Left ventricle myocardium inferior (tissue), 1 donor: ENCODE measurements at regions of chr1 and their contacts with region 1.

Region 1: GRCh38 chr1:58739856-58740466 is 40.1 kb upstream of the MYSM1 start:
- DNase-seq: no peak
- H3K4me3 ChIP-seq: no peak overlapping the region
- H3K27ac ChIP-seq: no peak overlapping the region
- H3K4me1 ChIP-seq: peaks cover 8% of the 10 kb centered on the region
- H3K27me3 ChIP-seq: no peaks in the 10 kb centered on the region
- CTCF ChIP-seq: peak; percentile 88

Region 2: DNA sequence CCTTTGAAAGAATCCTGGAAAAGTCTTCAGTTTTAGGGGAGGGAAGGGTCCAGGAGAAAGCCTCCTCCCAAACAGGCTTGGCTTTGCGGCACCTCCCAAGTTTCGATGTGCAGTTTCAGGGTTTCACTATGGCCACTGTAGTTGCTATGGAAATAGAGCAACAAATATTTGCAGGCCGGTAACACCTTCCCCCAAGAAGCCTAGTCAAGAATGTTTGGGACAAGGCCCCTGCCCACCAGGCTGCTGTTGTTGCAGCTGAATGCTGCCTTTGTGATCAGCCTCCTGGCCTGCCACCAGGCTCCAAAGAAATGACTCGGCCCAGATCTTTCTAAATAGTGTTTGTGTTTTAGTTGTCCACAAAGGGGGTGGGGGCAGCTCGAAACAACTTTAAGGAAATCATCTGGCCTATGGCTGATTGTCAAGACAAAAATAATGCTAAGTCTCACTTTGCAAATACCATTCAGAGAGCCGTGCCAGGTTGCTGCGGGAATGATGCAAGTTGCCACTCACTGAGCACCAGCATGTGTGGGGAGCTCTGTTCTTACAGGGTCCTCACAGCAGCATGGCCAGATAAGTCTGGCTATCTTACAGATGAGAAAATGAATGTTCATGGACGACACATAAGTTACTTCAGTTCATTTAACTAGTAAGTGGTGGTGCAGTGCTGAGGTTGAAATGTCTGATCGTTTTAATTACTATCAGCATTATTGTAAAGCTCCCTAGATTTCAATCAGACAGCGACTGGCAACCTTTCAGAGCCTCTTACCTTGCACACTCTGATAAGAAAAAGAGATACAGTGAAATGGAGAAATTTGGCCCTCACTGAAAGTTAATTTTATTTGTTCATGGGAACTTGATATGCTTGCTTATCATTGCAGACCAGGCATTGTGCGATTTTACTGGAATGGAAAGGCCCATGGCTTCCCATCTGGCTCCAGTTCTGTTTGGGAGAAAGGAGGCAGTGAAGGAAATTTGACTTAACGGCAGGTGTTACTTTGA is 135.1 kb after region 1 on chr1:
- intact Hi-C with region 1: no loop called
- DNase-seq: peak; percentile 35
- H3K4me3 ChIP-seq: no peak overlapping the region
- H3K27ac ChIP-seq: peak overlapping the region; percentile 60
- H3K4me1 ChIP-seq: peaks cover 30% of the 10 kb centered on the region
- H3K27me3 ChIP-seq: no peaks in the 10 kb centered on the region
- CTCF ChIP-seq: no peak

Region 3: DNA sequence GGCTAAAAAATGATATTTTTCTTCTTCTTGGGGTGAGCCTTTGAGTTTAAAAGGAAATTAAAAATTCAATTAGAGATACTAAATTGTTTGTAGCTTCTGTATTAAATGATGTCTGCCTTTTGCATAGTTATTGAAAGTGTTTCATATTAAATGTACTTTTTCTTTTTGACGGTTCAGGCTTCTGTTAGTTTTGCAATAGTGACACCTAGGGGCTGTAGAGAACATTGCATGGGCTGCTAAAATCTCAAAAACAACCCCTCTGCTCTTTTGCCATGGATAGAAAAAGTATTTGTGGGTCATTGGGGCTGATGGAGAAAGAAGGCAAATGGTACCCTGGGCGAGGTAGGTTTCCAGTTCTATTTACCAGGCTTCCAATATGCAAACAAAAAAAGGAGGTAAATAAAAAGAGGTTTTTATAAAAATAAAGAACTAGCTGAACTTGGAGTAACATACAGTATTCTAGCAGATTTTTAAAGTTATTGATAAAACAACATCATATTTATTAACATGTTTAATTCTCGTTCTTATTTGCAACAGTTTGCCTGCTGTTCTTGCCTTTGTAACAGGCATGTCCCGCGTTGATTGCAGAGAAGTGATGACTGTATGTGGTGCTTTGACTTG is 959.4 kb after region 1 on chr1:
- intact Hi-C with region 1: loop called (anchors 5 kb)
- DNase-seq: no peak
- H3K4me3 ChIP-seq: no peak overlapping the region
- H3K27ac ChIP-seq: peak overlapping the region; percentile 45
- H3K4me1 ChIP-seq: peaks cover 43% of the 10 kb centered on the region
- H3K27me3 ChIP-seq: no peaks in the 10 kb centered on the region
- CTCF ChIP-seq: peak; percentile 97

Region 4: GRCh38 chr1:59767119-59767518 is 1027.2 kb after region 1 on chr1:
- intact Hi-C with region 1: loop called (anchors 10 kb)
- DNase-seq: no peak
- H3K4me3 ChIP-seq: no peak overlapping the region
- H3K27ac ChIP-seq: no peak overlapping the region
- H3K4me1 ChIP-seq: no peaks in the 10 kb centered on the region
- H3K27me3 ChIP-seq: no peaks in the 10 kb centered on the region
- CTCF ChIP-seq: no peak